SK-N-SH (cell line): ENCODE measurements at regions of chr16 and their contacts with region 1.

Region 1: DNA sequence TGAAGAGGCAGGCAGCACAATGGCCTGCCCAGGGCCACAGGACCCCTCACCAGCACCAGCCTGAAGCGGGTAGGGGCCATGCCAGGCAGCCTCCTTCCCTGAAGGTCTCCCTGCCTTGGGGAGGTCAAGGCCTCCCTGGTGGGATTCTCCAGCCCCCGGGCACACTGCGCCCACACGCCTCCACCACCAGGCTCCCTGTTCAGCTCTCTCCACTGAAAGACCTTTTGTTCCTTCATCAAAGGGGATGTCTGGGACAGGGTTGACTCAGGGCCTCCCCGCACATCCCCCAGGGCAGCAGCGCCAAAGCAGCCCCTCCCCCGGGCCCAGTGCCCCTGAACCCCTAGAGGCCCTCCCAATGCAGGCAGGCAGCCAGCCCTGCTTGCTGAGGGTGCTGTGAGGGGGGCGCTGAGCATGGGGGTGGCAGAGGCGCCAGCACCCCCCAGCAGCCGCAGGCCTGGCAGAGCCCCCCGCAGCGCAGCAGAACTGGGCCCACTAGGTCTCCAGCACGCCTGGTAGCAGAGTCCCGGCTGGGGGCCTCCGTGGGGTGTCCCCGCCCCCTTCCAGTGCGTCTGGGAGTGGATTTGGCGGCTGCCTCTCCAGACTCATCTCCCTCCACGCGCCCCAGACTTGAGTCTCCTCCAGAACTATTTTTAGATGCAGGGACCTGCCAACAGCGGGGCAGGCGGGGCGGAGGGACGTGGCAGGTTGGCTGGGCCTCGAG is 13.1 kb downstream of the BCAR1 start:
- DNase-seq: peak; percentile 71
- H3K4me3 ChIP-seq: peak overlapping the region in 1 of 2 experiments; percentile 41; a peak in 2 of 4 replicates
- H3K27ac ChIP-seq: peak overlapping the region; percentile 85 to 95
- H3K4me1 ChIP-seq: peaks cover 41 to 57% of the 10 kb centered on the region in 2 experiments
- H3K27me3 ChIP-seq: no peaks in the 10 kb centered on the region
- CTCF ChIP-seq: peak; percentile 9; the same call in 1 of the 2 replicates
- EP300 ChIP-seq: peak in 1 of 2 experiments; percentile 39; a peak in 1 of 4 replicates
- RAD21 ChIP-seq: no peak

Region 2: DNA sequence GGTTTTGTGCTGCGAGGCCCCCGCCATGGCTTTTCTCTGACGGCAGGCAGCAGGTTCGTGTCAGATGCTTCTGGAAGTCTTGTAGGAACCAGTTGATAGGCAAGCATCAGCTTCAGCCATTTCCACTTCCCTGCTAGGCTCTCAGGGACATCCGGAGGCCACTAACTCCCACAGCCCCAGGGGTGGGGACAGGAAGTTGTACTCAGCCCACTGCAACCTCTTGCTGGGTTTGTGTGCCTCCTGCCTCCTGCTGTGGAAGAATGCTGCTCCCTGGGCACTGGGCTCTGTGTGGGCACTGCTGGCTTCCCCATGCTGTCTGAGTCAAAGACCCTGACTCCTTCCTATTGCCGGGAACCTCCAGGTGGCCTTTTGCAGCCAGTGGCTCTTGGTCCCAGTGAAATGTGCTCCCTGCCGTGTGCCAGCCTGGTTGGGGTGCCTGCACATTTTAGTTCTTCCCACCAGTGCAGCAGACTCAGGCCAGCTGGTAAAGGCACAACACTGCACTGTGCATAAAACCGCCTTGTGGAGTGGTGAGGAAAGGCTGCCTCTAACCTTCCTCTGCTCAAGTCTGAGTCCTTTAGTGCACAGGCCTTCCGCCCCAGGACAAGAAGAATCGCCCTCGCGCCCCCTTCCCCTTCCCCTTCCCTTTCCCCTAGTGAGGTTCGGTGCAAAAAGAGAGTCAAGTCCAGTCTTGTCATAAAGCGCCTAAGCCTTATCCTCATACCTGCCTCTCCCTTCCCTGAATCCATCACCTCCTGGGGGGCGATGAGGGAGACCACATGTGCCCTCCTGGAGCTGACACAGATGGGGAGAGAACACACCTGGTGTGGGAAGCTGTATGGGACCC is 138.3 kb before region 1 on chr16:
- CTCF ChIA-PET with region 1: no interaction called
- POLR2A ChIA-PET with region 1: no interaction called
- DNase-seq: peak; percentile 29
- H3K4me3 ChIP-seq: no peak overlapping the region
- H3K27ac ChIP-seq: 0 out of 4 replicates have a peak overlapping the region, but pooled peaks of 1 of the 2 experiments have one; percentile 29
- H3K4me1 ChIP-seq: peaks cover 17 to 36% of the 10 kb centered on the region in 2 experiments; a peak in 3 of 4 replicates
- H3K27me3 ChIP-seq: no peaks in the 10 kb centered on the region
- CTCF ChIP-seq: no peak
- EP300 ChIP-seq: no peak
- RAD21 ChIP-seq: no peak

Region 3: GRCh38 chr16:75198135-75198600 is 40.1 kb before region 1 on chr16:
- CTCF ChIA-PET with region 1: interaction called, 58 read pairs
- POLR2A ChIA-PET with region 1: no interaction called
- DNase-seq: peak; percentile 71
- H3K4me3 ChIP-seq: peak overlapping the region in 1 of 2 experiments; percentile 19; a peak in 1 of 4 replicates
- H3K27ac ChIP-seq: peak overlapping the region in 1 of 2 experiments; percentile 8; a peak in 1 of 4 replicates
- H3K4me1 ChIP-seq: peaks cover 0 to 8% of the 10 kb centered on the region in 2 experiments; a peak in 1 of 4 replicates
- H3K27me3 ChIP-seq: no peaks in the 10 kb centered on the region
- CTCF ChIP-seq: no peak
- EP300 ChIP-seq: peak in 1 of 2 experiments; percentile 32; a peak in 1 of 4 replicates
- RAD21 ChIP-seq: no peak

Region 4: GRCh38 chr16:75227361-75228142 is 10.7 kb before region 1 on chr16:
- CTCF ChIA-PET with region 1: no interaction called
- POLR2A ChIA-PET with region 1: no interaction called
- DNase-seq: no peak
- H3K4me3 ChIP-seq: no peak overlapping the region
- H3K27ac ChIP-seq: no peak overlapping the region
- H3K4me1 ChIP-seq: peaks cover 0 to 2% of the 10 kb centered on the region in 2 experiments; a peak in 1 of 4 replicates
- H3K27me3 ChIP-seq: no peaks in the 10 kb centered on the region
- CTCF ChIP-seq: no peak
- EP300 ChIP-seq: no peak
- RAD21 ChIP-seq: no peak

Region 5: DNA sequence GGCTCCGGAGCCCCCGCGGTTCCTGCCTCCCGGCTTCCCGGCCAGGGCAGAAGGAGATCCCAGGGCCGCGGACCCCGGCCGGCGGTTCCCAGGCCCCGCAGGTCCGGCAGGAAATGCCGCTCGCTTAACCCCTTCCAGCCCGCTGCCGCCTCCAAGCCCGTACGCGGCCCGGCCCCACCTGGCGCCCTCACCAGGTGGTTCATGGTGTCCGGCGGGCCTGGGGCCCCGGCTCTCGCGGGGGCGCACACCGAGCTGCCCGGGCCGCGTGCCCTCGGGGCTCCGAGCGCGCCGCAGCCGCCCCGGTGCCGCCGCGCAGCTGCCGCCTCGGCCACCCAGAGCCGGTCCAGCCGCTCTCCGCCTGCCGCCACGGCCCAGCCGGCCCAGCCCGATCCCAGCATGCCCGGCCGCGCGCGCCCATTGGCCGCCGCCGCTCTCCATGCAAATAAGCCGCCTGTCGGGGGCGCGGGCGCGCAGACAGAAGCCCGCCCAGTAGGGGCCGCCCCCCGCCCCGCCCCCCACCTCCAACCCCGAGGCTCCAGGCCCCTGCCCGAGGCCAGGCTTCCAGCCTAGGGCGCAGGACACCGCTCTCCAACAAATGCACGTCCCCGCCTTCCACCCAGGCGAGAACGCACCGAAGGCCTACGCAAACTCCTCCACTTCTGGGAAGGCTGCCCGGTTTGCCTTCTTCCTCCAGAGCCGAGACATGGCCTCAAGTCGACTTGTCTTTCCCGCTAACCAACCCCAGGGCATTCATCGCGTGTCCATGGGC is 13.2 kb after region 1 on chr16 and contains the start of gene BCAR1:
- CTCF ChIA-PET with region 1: interaction called, 35 read pairs
- POLR2A ChIA-PET with region 1: no interaction called
- DNase-seq: peak; percentile 97
- H3K4me3 ChIP-seq: peak within 1 kb of the TSS; percentile 77 to 88
- H3K27ac ChIP-seq: peak within 1 kb of the TSS; percentile 86 to 98
- H3K4me1 ChIP-seq: peaks cover 73 to 74% of the 10 kb centered on the region in 2 experiments; a peak in 3 of 4 replicates
- H3K27me3 ChIP-seq: no peaks in the 10 kb centered on the region
- CTCF ChIP-seq: no peak
- EP300 ChIP-seq: no peak
- RAD21 ChIP-seq: no peak
- polyA plus RNA-seq, gene BCAR1: 29.2 and 45.1 TPM in 2 replicates

Region 6: GRCh38 chr16:75269358-75270280 is 31.3 kb after region 1 on chr16:
- CTCF ChIA-PET with region 1: no interaction called
- POLR2A ChIA-PET with region 1: no interaction called
- DNase-seq: no peak
- H3K4me3 ChIP-seq: no peak overlapping the region
- H3K27ac ChIP-seq: no peak overlapping the region
- H3K4me1 ChIP-seq: peaks cover 8 to 24% of the 10 kb centered on the region in 2 experiments; a peak in 2 of 4 replicates
- H3K27me3 ChIP-seq: no peaks in the 10 kb centered on the region
- CTCF ChIP-seq: no peak
- EP300 ChIP-seq: no peak
- RAD21 ChIP-seq: no peak

Region 7: DNA sequence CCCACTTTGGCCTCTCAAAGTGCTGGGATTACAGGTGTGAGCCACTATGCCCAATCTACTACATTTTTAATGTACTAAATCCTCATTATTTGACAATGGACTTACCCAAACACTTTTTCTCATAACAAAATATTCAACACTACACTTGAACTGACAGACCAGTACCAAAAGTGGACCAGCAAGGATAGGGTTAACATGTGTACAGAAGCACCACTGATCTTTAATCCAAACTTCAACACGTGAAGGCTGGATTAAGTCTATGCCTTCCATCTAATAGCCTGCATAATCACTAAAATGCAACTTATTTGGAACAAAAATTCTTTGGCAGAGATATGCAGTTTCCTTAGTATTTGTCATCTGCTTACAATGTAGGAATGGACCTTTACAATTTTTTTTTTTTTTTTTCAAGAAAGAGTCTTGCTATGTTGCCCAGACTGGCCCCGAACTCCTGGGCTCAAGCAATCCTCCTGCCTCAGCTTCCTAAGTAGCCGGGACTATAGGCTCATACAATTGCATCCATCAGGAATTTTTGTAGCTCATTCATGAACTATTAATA is 73.2 kb after region 1 on chr16:
- CTCF ChIA-PET with region 1: interaction called, 10 read pairs
- POLR2A ChIA-PET with region 1: no interaction called
- DNase-seq: no peak
- H3K4me3 ChIP-seq: no peak overlapping the region
- H3K27ac ChIP-seq: peak overlapping the region in 1 of 2 experiments; percentile 56; a peak in 3 of 4 replicates
- H3K4me1 ChIP-seq: peaks cover 0 to 14% of the 10 kb centered on the region in 2 experiments; a peak in 3 of 4 replicates
- H3K27me3 ChIP-seq: no peaks in the 10 kb centered on the region
- CTCF ChIP-seq: no peak
- EP300 ChIP-seq: no peak; a peak in 1 of 4 replicates
- RAD21 ChIP-seq: no peak

Region 8: GRCh38 chr16:75372236-75372856 is 134.1 kb after region 1 on chr16:
- CTCF ChIA-PET with region 1: interaction called, 26 read pairs
- POLR2A ChIA-PET with region 1: no interaction called
- DNase-seq: no peak
- H3K4me3 ChIP-seq: no peak overlapping the region
- H3K27ac ChIP-seq: peak overlapping the region in 1 of 2 experiments; percentile 56; a peak in 2 of 4 replicates
- H3K4me1 ChIP-seq: peaks cover 3 to 10% of the 10 kb centered on the region in 2 experiments
- H3K27me3 ChIP-seq: no peaks in the 10 kb centered on the region
- CTCF ChIP-seq: no peak
- EP300 ChIP-seq: no peak
- RAD21 ChIP-seq: no peak

Region 9: GRCh38 chr16:75385507-75386152 is 147.3 kb after region 1 on chr16:
- CTCF ChIA-PET with region 1: interaction called, 72 read pairs
- POLR2A ChIA-PET with region 1: interaction called, 5 read pairs
- DNase-seq: peak; percentile 49
- H3K4me3 ChIP-seq: no peak overlapping the region; a peak in 1 of 4 replicates
- H3K27ac ChIP-seq: peak overlapping the region; percentile 19 to 68; a peak in 3 of 4 replicates
- H3K4me1 ChIP-seq: peaks cover 0 to 25% of the 10 kb centered on the region in 2 experiments; a peak in 3 of 4 replicates
- H3K27me3 ChIP-seq: no peaks in the 10 kb centered on the region
- CTCF ChIP-seq: peak; percentile 76
- EP300 ChIP-seq: no peak
- RAD21 ChIP-seq: peak; percentile 81

Region 10: DNA sequence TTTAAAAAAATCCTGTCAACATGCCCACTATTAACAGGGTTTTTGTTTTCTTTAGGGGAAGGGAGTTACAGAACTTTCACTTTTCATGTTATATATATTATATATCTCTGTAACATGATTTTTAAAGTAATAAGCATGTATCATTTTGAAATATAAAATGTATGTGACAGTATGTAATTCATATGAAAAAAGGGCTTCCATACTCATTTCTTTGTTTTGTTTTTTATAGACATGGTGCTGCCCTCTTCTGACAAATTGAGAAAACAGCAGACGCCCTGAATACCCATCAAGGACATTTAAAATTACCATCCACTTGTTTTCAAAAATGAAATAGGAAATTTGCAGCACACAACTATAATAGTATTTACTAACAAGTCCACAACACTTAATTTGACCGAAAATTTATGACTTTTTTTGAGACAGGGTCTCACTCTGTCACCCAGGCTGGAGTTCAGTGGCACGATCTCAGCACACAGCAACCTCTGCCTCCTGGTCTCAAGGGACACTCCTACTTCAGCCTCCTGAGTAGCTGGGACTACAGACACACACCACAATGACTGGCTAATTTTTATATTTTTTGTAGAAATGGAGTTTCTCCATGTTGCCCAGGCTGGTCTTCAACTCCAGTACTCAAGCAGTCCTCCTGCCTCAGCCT is 164.7 kb after region 1 on chr16:
- CTCF ChIA-PET with region 1: interaction called, 33 read pairs
- POLR2A ChIA-PET with region 1: no interaction called
- DNase-seq: peak; percentile 50
- H3K4me3 ChIP-seq: no peak overlapping the region
- H3K27ac ChIP-seq: peak overlapping the region in 1 of 2 experiments; percentile 98; a peak in 2 of 4 replicates
- H3K4me1 ChIP-seq: peaks cover 3 to 11% of the 10 kb centered on the region in 2 experiments; a peak in 3 of 4 replicates
- H3K27me3 ChIP-seq: no peaks in the 10 kb centered on the region
- CTCF ChIP-seq: peak; percentile 83
- EP300 ChIP-seq: no peak
- RAD21 ChIP-seq: peak; percentile 70